Activated T-helper 1 cell treated with anti-CD3 and anti-CD28 coated beads, Interleukin-12 subunit alpha, Interleukin-12 subunit beta, Interleukin-2, Interleukin-4 antibody, amounts not matched to agents 30 ng/mL and 10 ng/mL and 1 ng/mL, durations not matched to agents 14 hours and 24 hours and 36 hours (primary cell): ENCODE measurements at regions of chr13 and their contacts with region 1.

Region 1: DNA sequence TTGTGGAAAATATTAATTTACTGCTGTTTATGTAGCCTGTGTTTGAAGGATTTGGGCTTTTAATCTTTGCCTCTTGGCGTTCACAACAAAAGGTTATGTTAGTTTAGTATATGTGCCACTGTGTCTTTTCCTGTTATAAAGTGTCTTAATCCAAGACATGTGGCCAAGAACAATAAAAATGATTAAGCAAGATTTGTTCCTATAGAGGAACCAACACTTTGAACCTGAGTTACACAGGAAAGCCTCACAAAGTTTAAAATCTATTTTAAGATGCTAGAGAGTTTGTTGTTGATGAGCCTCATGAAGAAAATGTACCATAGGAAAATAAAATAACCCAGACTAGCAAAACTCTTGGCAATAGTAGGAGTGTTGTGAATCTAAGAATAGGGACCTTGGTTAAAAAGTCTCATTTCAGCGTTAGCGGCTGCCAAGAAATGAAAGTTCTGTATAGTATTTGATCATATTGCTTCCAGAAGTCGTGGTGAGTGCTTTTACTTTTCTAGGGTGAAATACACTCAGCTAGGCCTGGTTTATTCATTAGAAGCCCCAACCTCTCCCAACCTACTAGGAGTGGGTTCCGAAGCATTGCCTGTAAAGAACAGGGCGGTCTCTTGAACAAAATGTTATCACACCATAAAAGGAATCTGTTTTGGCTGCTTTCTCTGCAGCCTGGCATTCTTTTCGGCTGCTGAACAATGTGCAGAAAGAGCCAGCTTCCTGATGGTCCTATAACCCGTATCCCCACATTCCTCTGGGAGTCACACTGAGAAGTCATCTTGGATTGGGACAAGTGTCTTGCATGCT is 102.6 kb downstream of the LRCH1 start:
- DNase-seq: no peak
- H3K4me3 Mint-ChIP-seq: peak overlapping the region; percentile 35
- H3K27ac Mint-ChIP-seq: peak overlapping the region; percentile 38
- H3K4me1 Mint-ChIP-seq: peaks cover 35% of the 10 kb centered on the region
- H3K27me3 Mint-ChIP-seq: no peaks in the 10 kb centered on the region

Region 2: DNA sequence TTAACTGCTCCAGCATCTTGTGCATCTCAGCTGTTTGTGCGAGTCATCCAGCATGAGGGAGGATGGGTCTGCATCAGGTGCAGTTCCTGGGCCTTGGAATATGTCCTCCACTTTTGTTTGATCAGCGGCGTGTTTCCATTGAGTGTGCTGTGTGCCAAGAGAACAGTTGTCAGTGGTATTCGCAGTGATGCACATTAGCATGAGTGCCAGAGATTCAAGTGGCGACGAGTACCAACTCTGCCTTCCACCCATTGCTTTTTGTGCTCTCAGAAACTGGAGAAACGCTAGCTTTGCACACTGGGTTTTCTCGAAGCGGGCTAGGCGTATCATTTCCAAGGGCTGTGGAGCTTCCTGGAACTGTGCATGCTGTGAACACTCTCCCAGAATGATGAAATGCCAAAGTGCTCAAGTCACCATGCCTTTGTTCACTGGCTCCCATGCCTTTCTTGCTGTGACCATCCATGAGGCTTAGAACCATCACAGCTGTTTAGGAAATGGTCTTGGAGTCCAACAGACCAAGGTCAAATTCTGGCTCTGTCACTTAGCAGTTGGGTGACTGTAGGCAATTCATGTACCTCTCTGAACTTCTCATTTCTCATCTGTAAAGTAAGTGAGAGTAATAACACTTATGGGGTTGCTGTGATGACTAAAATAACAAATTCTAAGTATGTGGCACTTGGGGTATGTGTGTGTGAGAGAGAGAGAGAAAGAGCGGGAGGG is 84.2 kb before region 1 on chr13:
- intact Hi-C with region 1: no loop called
- DNase-seq: no peak
- H3K4me3 Mint-ChIP-seq: no peak overlapping the region
- H3K27ac Mint-ChIP-seq: peak overlapping the region; percentile 35
- H3K4me1 Mint-ChIP-seq: peaks cover 43% of the 10 kb centered on the region
- H3K27me3 Mint-ChIP-seq: no peaks in the 10 kb centered on the region

Region 3: DNA sequence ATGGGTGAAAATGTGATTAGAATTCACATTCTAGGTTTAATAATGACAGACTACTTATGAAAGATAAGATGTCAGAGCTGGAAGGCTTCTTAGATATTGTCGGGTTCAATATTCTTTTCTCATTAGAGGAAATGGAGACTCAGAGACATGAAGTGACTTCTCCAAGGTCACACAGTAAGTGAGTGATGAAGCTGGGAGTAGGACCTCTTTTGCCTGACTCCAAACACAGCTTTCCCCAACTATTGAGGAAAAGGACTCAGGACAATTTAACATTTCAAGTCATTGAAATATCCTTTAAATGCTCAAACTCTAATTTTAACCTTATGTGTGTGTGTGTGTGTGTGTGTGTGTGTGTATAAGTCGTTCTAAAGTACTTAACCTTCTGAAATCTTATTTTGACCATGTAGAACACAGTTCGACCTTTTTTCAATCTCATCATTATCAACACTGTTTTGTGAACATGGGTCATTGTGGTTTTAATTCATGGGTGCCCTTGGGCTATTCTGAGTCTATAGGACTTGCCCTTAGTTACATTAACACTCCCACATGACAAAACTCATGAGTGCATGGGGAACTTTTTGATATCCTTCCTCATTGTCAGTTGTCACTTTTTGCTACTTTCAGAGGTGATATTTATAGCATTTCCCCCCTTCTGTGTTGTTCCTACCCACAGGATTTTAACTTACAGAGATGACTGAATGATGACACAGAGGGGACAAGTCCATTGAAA is 49.6 kb before region 1 on chr13:
- intact Hi-C with region 1: loop called (anchors 1 kb)
- DNase-seq: no peak
- H3K4me3 Mint-ChIP-seq: peak overlapping the region; percentile 1
- H3K27ac Mint-ChIP-seq: peak overlapping the region; percentile 23
- H3K4me1 Mint-ChIP-seq: peaks cover 64% of the 10 kb centered on the region
- H3K27me3 Mint-ChIP-seq: no peaks in the 10 kb centered on the region

Region 4: GRCh38 chr13:46679369-46680120 is 24.0 kb after region 1 on chr13:
- intact Hi-C with region 1: loop called (anchors 2 kb)
- DNase-seq: peak; percentile 38
- H3K4me3 Mint-ChIP-seq: no peak overlapping the region
- H3K27ac Mint-ChIP-seq: no peak overlapping the region
- H3K4me1 Mint-ChIP-seq: peaks cover 20% of the 10 kb centered on the region
- H3K27me3 Mint-ChIP-seq: no peaks in the 10 kb centered on the region